Aorta (tissue), 5 donors: ENCODE measurements at regions of chr6 and their contacts with region 1.

Region 1: DNA sequence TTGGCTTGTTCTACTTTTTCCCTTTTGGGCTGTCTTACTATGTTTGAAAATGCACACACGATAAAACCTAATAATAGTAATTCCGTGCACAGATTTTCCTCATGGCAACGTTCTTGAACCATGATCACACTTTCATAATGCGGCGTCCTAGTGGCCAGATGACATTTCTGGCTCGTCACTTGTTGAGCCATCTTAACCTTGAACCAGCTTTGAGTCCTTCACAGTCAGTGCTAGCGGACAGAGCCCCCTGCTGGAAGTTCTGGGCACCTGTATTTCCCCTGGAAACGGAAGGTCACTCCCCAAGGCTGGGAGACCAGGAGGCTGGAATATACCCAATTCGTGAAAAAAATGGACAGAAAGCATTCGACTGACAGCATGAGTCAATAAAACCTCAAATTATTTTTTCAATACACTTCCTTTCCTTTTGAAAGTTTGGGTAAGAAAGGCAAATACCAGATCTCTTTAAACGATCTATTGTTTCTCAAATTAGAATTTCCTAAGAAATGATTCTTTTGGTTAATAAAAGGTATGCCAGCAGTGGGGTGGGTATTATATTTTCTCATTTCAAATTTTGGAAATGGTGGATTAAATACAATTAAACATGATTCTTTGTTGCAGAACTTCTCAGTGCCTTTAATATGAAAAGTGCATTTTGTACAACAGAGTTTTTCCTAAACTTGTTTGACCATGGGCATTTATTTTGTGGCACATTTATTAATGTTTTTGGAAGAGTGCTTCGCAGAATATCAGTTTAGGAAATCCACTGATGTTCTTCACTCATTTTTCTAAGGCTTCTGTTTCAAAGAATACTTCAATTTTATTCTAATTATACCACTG is 542.3 kb downstream of the QKI start:
- DNase-seq: peak; percentile 82 to 89
- ATAC-seq: peak; percentile 85
- H3K4me3 ChIP-seq: no peak overlapping the region
- H3K27ac ChIP-seq: no peak overlapping the region
- H3K4me1 ChIP-seq: no peaks in the 10 kb centered on the region
- H3K27me3 ChIP-seq: no peaks in the 10 kb centered on the region

Region 2: DNA sequence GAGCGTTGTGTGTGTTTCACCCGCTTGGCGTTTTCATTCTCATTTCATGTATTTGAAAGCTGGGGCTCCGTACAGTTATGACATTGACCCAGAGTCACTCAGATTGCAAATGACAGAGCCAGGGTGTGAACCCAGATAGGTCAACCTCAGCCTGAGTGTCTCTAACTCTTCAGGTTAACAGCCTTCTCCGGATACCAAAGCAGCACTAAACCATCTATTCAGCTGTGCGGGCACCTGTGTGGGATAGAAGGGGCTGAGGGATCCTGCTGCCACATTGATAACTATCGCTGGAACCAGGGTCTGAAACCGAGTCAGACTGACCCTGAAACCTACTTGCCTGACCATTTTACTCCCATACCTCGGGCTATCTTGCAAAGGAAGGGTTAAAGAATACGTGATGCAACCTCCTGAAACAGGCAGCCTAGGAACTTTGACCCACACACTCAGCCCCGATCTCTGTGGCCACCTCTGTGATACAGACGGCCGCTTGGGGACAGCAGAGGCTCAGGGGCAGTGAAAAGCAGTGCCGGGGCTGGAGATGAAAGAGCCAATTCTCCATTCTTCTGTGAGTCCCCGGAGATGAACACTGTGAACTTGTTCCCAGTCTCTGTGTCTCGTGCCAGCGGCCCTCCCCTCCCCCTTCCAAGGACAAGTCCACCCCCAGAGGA is 775.8 kb before region 1 on chr6:
- intact Hi-C with region 1: loop called in 1 of 2 experiments (anchors 5 kb)
- DNase-seq: peak in 1 of 2 donors; percentile 82
- ATAC-seq: peak; percentile 64
- H3K4me3 ChIP-seq: no peak overlapping the region
- H3K27ac ChIP-seq: no peak overlapping the region
- H3K4me1 ChIP-seq: no peaks in the 10 kb centered on the region
- H3K27me3 ChIP-seq: no peaks in the 10 kb centered on the region

Region 3: DNA sequence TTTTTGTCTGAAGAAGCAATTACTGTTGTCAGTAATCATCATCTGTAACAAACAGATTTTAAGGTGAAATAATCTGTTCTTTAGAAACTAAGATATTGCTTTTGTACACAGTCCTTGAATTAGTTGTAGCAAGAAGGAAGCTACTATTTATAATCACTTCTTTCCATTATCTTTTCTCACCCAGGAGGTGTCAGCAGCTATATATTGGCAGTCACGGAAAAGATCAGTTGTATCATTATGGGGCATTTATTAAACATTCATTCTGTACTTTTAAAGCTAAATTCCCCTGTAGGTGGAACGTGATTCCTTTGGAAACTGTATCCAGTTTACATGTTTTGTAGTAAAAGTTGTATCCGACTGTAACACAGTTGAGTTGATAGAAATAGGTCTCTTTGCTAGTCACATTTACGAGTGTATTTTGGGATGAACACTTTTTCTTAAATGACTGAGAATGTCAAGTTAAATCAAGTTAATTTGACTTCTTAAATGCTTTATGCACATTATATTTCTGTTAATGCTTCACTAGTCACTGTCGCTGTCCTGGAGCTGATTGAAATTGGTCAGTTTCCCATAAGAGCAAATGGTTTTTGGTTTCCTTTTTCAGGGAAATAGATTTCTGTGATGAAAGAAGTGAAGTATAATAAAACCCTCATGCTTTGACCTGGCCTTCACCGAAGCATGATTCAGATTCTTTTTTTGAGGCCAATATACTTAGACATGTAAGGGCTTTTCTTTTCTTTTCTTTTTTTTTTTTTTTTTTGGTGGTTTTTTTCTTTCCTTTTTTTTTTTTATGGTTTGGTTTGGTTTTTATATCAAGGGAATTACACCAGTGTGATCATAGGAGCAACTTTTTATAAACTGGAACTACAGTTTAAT is 537.1 kb before region 1 on chr6:
- intact Hi-C with region 1: loop called (anchors 5 to 10 kb)
- DNase-seq: no peak
- ATAC-seq: no peak
- H3K4me3 ChIP-seq: peak overlapping the region; percentile 20 to 69
- H3K27ac ChIP-seq: no peak overlapping the region
- H3K4me1 ChIP-seq: peaks cover 3 to 9% of the 10 kb centered on the region in 2 donors
- H3K27me3 ChIP-seq: no peaks in the 10 kb centered on the region